ENCODE measurements at regions of chr15 and their contacts with region 1.

Region 1: GRCh38 chr15:40593588-40594428 is at the start of gene KNL1:
- DNase-seq: peak; percentile 68 to 94 (median 81)
- ATAC-seq: peak; percentile 83 to 87 (median 86)
- H3K4me3 ChIP-seq: peak within 1 kb of the TSS; percentile 68 to 96
- H3K4me3 Mint-ChIP-seq: peak within 1 kb of the TSS; percentile 85 to 99 (median 90)
- H3K27ac ChIP-seq: peak within 1 kb of the TSS; percentile 89
- H3K27ac Mint-ChIP-seq: peak within 1 kb of the TSS; percentile 95 to 99
- H3K4me1 ChIP-seq: peaks cover 6 to 16% of the 10 kb centered on the region in 2 experiments
- H3K4me1 Mint-ChIP-seq: peaks cover 27 to 36% (median 31%) of the 10 kb centered on the region in 3 donors
- H3K27me3 ChIP-seq: peaks cover 0 to 6% of the 10 kb centered on the region in 2 experiments
- H3K27me3 Mint-ChIP-seq: peaks cover 4% of the 10 kb centered on the region in 2 donors
- total RNA-seq, gene KNL1: 0.55 to 3.8 (median 1.7) TPM

Region 2: DNA sequence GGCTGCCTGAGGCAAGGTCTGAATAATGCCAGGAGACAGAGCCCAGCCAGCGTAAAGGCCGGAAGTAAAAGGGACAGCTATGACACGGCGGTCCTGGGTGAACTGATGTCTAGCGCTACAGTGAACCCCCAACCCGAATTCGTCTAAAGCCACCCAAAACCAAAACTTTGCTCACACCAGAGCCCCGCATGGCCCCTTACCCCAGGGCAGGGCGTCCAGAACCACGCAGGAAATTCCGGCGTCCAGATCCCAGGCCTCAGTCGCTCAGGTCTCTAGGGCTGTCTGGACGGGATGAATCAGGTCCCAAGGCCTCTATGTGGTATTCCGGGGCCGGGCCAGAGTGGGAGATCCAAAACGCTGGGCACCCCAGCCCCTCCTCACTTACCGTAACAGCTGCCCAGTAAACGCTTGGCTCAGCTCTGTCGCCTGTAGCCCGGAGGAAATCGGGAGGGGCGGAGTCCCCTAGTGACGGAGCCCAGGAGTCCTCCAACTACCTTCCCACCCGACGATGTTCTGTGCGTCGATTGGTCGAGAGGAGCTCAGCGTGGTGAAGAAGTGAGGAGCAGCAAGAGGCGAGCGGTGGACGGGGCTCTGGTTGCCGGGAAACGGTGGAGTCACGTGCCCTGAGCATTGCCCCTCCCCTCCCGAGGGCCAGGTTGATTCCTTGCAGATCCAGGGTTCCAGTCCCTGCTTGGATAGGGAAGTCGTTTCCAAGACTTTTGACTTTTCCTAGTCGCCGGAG is 29.0 kb before region 1 on chr15 and contains the start of gene CCDC32:
- CTCF ChIA-PET with region 1: interaction called, 11 to 27 read pairs
- POLR2A ChIA-PET with region 1: interaction called, 8 to 18 read pairs
- DNase-seq: peak; percentile 82 to 99 (median 94)
- ATAC-seq: peak; percentile 93 to 96 (median 94)
- H3K4me3 ChIP-seq: peak within 1 kb of the TSS; percentile 79 to 95
- H3K4me3 Mint-ChIP-seq: peak within 1 kb of the TSS; percentile 88 to 95 (median 94)
- H3K27ac ChIP-seq: peak within 1 kb of the TSS; percentile 84
- H3K27ac Mint-ChIP-seq: peak within 1 kb of the TSS; percentile 84 to 94
- H3K4me1 ChIP-seq: peaks cover 15 to 28% of the 10 kb centered on the region in 2 experiments
- H3K4me1 Mint-ChIP-seq: peaks cover 55 to 66% (median 57%) of the 10 kb centered on the region in 3 donors
- H3K27me3 ChIP-seq: peaks cover 0 to 7% of the 10 kb centered on the region in 2 experiments
- H3K27me3 Mint-ChIP-seq: no peaks in the 10 kb centered on the region
- total RNA-seq, gene CCDC32: 19.9 to 31.5 (median 27.2) TPM

Region 3: DNA sequence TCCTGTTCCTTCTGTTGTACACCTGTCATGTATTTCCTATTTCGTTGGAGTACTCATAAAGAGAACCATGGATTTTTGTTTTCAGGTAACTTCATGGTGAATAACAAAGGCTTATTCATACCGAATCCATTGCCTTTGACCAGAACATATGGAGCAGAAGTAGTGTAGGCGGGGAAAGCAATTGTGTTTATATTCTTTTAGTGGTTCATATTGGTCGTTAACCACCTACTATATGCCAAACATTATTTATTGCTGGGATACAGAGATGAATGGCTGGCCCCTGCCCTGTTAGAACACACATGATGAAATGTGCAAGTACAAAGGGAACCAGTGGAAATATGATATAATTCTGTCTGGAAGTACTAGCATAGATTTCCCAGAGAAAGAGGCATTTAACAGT is 14.9 kb before region 1 on chr15:
- CTCF ChIA-PET with region 1: interaction called in 1 of 2 experiments, 7 read pairs
- POLR2A ChIA-PET with region 1: interaction called, 3 to 11 read pairs
- DNase-seq: no peak
- ATAC-seq: no peak
- H3K4me3 ChIP-seq: no peak overlapping the region
- H3K4me3 Mint-ChIP-seq: no peak overlapping the region
- H3K27ac ChIP-seq: no peak overlapping the region
- H3K27ac Mint-ChIP-seq: no peak overlapping the region
- H3K4me1 ChIP-seq: no peaks in the 10 kb centered on the region
- H3K4me1 Mint-ChIP-seq: peaks cover 2 to 6% (median 2%) of the 10 kb centered on the region in 3 donors
- H3K27me3 ChIP-seq: no peaks in the 10 kb centered on the region
- H3K27me3 Mint-ChIP-seq: no peaks in the 10 kb centered on the region

Region 4: DNA sequence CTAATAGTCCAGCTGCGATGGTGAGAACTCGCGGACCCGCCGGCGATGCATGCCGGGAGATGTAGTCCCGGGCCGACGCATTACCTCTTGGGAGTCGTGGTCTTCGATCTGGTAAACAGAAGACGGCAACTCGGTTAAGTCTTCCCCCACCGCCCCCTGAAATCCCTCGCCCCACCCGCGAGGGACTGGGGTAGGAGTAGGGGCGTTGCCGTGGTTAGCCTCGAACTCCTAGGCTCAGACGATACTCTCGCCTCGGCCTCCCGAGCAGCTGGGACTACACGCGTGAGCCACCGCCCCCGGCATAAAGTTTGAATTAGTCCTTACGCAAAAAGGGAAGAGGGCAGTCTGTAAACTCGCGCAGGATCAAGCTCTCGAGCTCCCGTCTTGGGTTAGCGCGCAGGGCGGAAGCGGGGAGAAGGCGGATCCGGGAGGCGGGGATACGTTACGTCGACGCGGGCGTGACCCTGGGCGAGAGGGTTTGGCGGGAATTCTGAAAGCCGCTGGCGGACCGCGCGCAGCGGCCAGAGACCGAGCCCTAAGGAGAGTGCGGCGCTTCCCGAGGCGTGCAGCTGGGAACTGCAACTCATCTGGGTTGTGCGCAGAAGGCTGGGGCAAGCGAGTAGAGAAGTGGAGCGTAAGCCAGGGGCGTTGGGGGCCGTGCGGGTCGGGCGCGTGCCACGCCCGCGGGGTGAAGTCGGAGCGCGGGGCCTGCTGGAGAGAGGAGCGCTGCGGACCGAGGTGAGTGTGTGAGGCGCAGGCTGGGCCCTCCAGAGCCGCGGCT is 101.1 kb after region 1 on chr15 and contains the start of gene RAD51:
- CTCF ChIA-PET with region 1: interaction called in 1 of 2 experiments, 18 read pairs
- POLR2A ChIA-PET with region 1: no interaction called
- DNase-seq: peak; percentile 82 to 95 (median 91)
- ATAC-seq: peak; percentile 95 to 96 (median 96)
- H3K4me3 ChIP-seq: peak within 1 kb of the TSS; percentile 96 to 97
- H3K4me3 Mint-ChIP-seq: peak within 1 kb of the TSS; percentile 98 to 100 (median 99)
- H3K27ac ChIP-seq: peak within 1 kb of the TSS; percentile 99
- H3K27ac Mint-ChIP-seq: peak within 1 kb of the TSS; percentile 96 to 100
- H3K4me1 ChIP-seq: peaks cover 9 to 23% of the 10 kb centered on the region in 2 experiments
- H3K4me1 Mint-ChIP-seq: peaks cover 19 to 27% (median 23%) of the 10 kb centered on the region in 3 donors
- H3K27me3 ChIP-seq: no peaks in the 10 kb centered on the region
- H3K27me3 Mint-ChIP-seq: no peaks in the 10 kb centered on the region
- total RNA-seq, gene RAD51: 0.85 to 2.5 (median 1.2) TPM

Region 5: GRCh38 chr15:40782580-40783227 is 188.9 kb after region 1 on chr15:
- CTCF ChIA-PET with region 1: interaction called, 9 to 15 read pairs
- POLR2A ChIA-PET with region 1: no interaction called
- DNase-seq: peak; percentile 60 to 85 (median 73)
- ATAC-seq: peak; percentile 90 to 96 (median 94)
- H3K4me3 ChIP-seq: no peak overlapping the region
- H3K4me3 Mint-ChIP-seq: no peak overlapping the region
- H3K27ac ChIP-seq: no peak overlapping the region
- H3K27ac Mint-ChIP-seq: peak overlapping the region in 1 of 2 donors; percentile 55
- H3K4me1 ChIP-seq: peaks cover 3 to 14% of the 10 kb centered on the region in 2 experiments
- H3K4me1 Mint-ChIP-seq: peaks cover 16 to 22% (median 18%) of the 10 kb centered on the region in 3 donors
- H3K27me3 ChIP-seq: no peaks in the 10 kb centered on the region
- H3K27me3 Mint-ChIP-seq: no peaks in the 10 kb centered on the region

Measured in T-cell (primary cell).